ENCODE measurements at regions of chr7 and their contacts with region 1.

Region 1: GRCh38 chr7:4861673-4862072 is at the start of gene PAPOLB:
- DNase-seq: no peak
- H3K4me3 ChIP-seq: peak within 1 kb of the TSS; percentile 12 to 52 (median 42)
- H3K27ac ChIP-seq: no peak within 1 kb of the TSS
- H3K4me1 ChIP-seq: peaks cover 0 to 9% (median 0%) of the 10 kb centered on the region in 4 donors
- H3K27me3 ChIP-seq: peaks cover 0 to 5% (median 0%) of the 10 kb centered on the region in 3 donors
- CTCF ChIP-seq: no peak
- EP300 ChIP-seq: no peak
- POLR2A ChIP-seq: no peak
- total RNA-seq, gene PAPOLB: 0.27 to 1.1 (median 0.49) TPM in 3 of 4 donors, not detected in the other

Region 2: DNA sequence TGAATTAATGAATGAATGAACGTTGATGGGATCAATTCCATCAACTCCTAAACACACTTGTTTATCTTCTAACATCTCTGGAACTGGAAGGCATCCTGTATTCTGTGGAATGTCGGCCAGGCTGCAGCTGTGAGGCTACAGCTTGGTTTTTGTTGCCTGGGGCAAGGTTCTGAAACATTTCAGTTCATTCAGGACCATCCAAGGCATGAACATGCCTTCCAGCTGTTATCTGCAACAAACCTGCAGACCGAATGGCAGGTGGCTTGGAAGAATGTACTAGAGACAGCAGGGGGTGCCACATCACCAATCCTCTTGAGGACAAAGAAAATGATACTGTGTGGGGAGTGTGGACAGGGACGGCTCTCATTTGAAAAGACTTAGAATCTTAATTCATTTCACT is 12.3 kb before region 1 on chr7:
- intact Hi-C with region 1: no loop called
- DNase-seq: no peak
- H3K4me3 ChIP-seq: no peak overlapping the region
- H3K27ac ChIP-seq: no peak overlapping the region
- H3K4me1 ChIP-seq: peaks cover 0 to 5% (median 0%) of the 10 kb centered on the region in 4 donors
- H3K27me3 ChIP-seq: no peaks in the 10 kb centered on the region
- CTCF ChIP-seq: peak in 1 of 4 experiments; percentile 13
- EP300 ChIP-seq: no peak
- POLR2A ChIP-seq: no peak

Region 3: GRCh38 chr7:4919969-4920766 is 58.5 kb after region 1 on chr7:
- intact Hi-C with region 1: loop called (anchors 2 kb)
- DNase-seq: no peak
- H3K4me3 ChIP-seq: no peak overlapping the region
- H3K27ac ChIP-seq: no peak overlapping the region
- H3K4me1 ChIP-seq: no peaks in the 10 kb centered on the region
- H3K27me3 ChIP-seq: peaks cover 0 to 3% (median 0%) of the 10 kb centered on the region in 3 donors
- CTCF ChIP-seq: no peak
- EP300 ChIP-seq: no peak
- POLR2A ChIP-seq: no peak